ENCODE measurements at regions of chr10 and their contacts with region 1.

Region 1: DNA sequence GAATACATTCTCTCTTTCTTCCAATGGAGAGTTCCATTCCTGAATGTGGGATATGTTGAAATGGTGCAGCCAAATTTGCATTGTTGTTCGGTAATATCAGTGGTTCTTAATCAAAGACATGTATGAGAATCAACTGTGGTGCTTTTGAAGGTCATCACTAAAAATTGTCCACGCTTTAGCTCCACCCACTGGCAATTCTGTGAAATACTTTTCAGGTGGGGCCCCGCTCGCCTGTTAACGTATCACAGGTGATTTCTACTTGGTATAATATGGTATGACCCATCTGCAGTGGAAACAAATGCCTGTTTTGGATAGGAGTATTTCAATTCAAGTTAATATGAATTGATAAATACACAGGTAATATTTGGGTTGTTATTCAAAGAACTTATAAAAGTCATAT is 178.4 kb downstream of the NSUN6 start:
- DNase-seq: no peak
- H3K4me3 ChIP-seq: no peak overlapping the region
- H3K27ac ChIP-seq: no peak overlapping the region
- H3K27me3 ChIP-seq: peaks cover 2% of the 10 kb centered on the region
- CTCF ChIP-seq: no peak

Region 2: DNA sequence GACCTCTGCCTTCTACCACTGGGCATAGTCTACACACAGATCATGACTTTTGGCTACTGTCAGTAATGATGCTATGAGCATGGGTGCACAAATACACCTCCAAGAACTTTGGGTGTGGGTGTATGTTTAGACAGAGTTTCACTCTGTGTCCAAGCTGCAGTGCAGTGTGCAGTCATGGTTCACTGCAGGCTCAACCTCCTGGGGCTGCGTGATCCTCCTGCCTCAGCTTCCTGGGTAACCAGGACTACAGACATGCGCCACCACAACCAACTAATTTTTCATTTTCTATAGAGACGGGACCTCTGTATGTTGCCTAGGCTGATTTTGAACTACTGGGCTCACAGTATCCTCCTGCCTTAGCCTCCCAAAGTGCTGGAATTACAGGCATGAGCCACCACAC is 16.0 kb before region 1 on chr10:
- CTCF ChIA-PET with region 1: interaction called, 10 read pairs
- POLR2A ChIA-PET with region 1: no interaction called
- DNase-seq: no peak
- H3K4me3 ChIP-seq: no peak overlapping the region
- H3K27ac ChIP-seq: no peak overlapping the region
- H3K27me3 ChIP-seq: no peaks in the 10 kb centered on the region
- CTCF ChIP-seq: no peak

Region 3: GRCh38 chr10:18619016-18619415 is 146.0 kb after region 1 on chr10:
- CTCF ChIA-PET with region 1: no interaction called
- POLR2A ChIA-PET with region 1: no interaction called
- DNase-seq: no peak
- H3K4me3 ChIP-seq: no peak overlapping the region
- H3K27ac ChIP-seq: no peak overlapping the region
- H3K27me3 ChIP-seq: no peaks in the 10 kb centered on the region
- CTCF ChIP-seq: no peak